Cardiac septum (tissue), 1 donor: ENCODE measurements at regions of chr10 and their contacts with region 1.

Region 1: GRCh38 chr10:80055760-80056159 is 22.7 kb upstream of the TMEM254 start:
- DNase-seq: no peak

Region 2: GRCh38 chr10:79981450-79982361 is 74.1 kb before region 1 on chr10:
- intact Hi-C with region 1: no loop called
- DNase-seq: no peak

Region 3: DNA sequence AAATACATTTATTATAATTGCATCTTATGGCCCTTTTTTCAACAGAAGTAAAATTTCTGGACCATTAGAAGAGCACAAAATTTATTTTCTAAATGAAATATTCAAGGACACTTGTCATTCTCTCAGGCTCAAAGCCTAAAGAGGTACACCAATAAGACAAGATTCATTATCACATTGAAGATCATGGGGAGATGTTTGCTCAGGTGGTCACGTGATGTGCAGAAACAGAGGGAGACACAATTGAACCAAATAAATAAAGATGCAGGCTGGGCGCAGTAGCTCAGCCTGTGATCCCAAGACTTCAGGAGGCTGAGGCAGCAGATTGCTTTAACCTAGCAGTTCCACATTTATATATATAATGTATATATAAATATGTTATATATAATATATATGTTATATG is 30.5 kb before region 1 on chr10:
- intact Hi-C with region 1: no loop called
- DNase-seq: no peak

Region 4: GRCh38 chr10:80144067-80144695 is 88.4 kb after region 1 on chr10:
- intact Hi-C with region 1: loop called (anchors 5 kb)
- DNase-seq: peak; percentile 75